ENCODE measurements at regions of chr19 and their contacts with region 1.

Region 1: DNA sequence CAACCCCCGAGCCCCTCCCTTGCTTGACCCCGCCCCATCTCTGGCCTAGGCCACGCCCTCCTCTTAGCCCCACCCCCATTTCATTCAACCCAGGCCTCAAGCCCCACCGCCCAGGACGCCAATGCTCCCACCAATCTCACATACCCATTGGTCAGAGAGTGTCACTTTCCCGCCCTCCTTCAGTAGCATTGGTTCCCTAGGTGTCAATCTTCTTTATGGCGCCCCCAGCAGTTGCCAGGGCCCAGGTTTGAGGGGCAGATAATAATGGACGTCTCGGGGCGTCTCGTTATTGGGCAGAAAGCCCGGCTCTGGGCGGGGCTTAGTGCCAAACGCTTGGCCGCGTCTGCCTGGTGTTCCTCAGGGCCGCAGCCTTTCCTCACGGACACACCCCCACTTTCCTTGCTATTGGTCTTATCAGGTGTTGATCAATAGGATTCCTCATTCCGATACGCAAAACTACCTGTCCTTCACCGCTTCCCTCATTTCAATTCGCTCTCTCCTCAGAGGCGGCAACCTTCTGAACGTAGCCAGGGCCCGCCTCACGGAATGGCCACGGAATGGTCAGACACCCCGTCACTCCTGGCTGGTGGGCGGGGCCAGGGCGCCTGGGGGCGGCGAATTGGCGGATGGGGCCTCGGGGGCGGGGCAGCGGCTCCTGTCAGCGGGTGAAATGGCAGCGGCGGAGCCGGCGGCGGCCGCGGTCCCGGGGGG is at the start of gene EVI5L:
- DNase-seq: peak; percentile 100
- ATAC-seq: peak; percentile 81
- H3K4me3 ChIP-seq: peak within 1 kb of the TSS; percentile 70
- H3K27ac ChIP-seq: no peak within 1 kb of the TSS
- H3K4me1 ChIP-seq: peaks cover 42% of the 10 kb centered on the region
- H3K27me3 ChIP-seq: no peaks in the 10 kb centered on the region
- CTCF ChIP-seq: no peak
- total RNA-seq, gene EVI5L: 29.5 and 42.4 TPM in 2 replicates

Region 2: GRCh38 chr19:7793493-7793892 is 36.2 kb before region 1 on chr19:
- CTCF ChIA-PET with region 1: no interaction called
- POLR2A ChIA-PET with region 1: no interaction called
- intact Hi-C with region 1: no loop called
- DNase-seq: no peak
- ATAC-seq: no peak
- H3K4me3 ChIP-seq: no peak overlapping the region
- H3K27ac ChIP-seq: no peak overlapping the region
- H3K4me1 ChIP-seq: peaks cover 25% of the 10 kb centered on the region
- H3K27me3 ChIP-seq: peaks cover 6% of the 10 kb centered on the region; the same call in 1 of the 2 replicates
- CTCF ChIP-seq: no peak

Region 3: GRCh38 chr19:7806876-7807275 is 22.8 kb before region 1 on chr19:
- CTCF ChIA-PET with region 1: interaction called, 7 read pairs
- POLR2A ChIA-PET with region 1: interaction called, 10 read pairs
- intact Hi-C with region 1: loop called (anchors 2 kb)
- DNase-seq: no peak
- ATAC-seq: no peak
- H3K4me3 ChIP-seq: no peak overlapping the region
- H3K27ac ChIP-seq: peak overlapping the region; percentile 78
- H3K4me1 ChIP-seq: peaks cover 28% of the 10 kb centered on the region
- H3K27me3 ChIP-seq: no peaks in the 10 kb centered on the region
- CTCF ChIP-seq: no peak

Region 4: GRCh38 chr19:7868676-7869452 is 39.1 kb after region 1 on chr19:
- CTCF ChIA-PET with region 1: interaction called, 3 read pairs
- POLR2A ChIA-PET with region 1: interaction called, 5 read pairs
- intact Hi-C with region 1: loop called (anchors 2 kb)
- DNase-seq: peak; percentile 95
- ATAC-seq: peak; percentile 52
- H3K4me3 ChIP-seq: peak overlapping the region; percentile 72
- H3K27ac ChIP-seq: peak overlapping the region; percentile 12; the same call in 1 of the 2 replicates
- H3K4me1 ChIP-seq: peaks cover 24% of the 10 kb centered on the region
- H3K27me3 ChIP-seq: no peaks in the 10 kb centered on the region
- CTCF ChIP-seq: peak; percentile 82